Endothelial cell of umbilical vein (primary cell): ENCODE measurements at regions of chr1 and their contacts with region 1.

Region 1: GRCh38 chr1:2300851-2301606 is 72.9 kb downstream of the SKI start:
- DNase-seq: peak; percentile 62
- H3K4me3 ChIP-seq: no peak overlapping the region
- H3K27ac ChIP-seq: peak overlapping the region; percentile 83
- H3K4me1 ChIP-seq: peaks cover 27% of the 10 kb centered on the region
- H3K27me3 ChIP-seq: no peaks in the 10 kb centered on the region
- CTCF ChIP-seq: no peak
- POLR2A ChIP-seq: peak; percentile 21

Region 2: DNA sequence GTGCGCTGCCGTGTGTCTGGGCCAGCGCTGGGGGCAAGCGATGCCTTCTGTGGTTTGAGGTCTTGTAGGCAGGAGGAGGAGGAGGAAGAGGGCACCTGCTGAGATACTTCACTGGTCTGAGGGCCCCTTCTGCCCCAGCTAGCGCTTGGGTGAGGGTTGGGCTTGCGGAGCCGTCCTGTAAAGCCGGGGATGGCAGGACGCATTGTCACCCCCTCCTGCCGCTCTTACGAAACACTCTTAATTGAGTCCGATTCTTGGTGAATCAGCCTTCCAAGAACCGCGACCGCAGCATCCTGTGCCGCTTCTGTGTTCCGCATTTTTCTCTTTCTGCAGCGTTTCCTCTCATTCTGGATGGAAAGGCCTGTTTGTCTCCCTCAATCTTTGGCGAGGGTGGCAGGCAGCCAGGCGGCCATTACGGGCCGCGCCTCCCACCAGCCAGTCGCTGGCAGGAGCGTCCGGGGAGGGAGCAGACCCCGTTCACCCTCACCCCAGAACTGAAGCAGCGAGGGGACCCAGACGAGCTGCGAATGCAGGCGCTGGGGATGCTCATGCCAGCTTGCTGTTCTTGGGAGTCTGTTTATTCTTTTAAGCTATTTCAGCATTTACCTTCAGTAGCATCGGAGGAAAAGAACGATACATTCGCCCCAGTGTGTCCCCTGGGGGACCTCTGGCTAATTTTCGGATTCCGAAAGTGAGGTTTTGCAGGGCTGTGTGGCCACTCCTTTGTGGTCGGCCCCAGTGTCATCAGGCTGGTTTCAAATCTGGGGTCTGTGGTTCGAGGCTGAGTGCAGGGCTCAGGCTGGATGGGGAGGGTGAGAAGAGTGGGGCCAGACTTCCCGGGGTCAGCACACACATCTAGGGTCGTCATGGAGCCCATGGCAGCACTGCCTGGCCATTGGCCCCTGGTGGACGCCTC is 10.2 kb before region 1 on chr1:
- CTCF ChIA-PET with region 1: interaction called, 3 read pairs
- POLR2A ChIA-PET with region 1: interaction called, 3 read pairs
- dilution Hi-C with region 1: no loop called
- intact Hi-C with region 1: loop called (anchors 1 kb)
- DNase-seq: peak; percentile 94
- H3K4me3 ChIP-seq: peak overlapping the region in 1 of 3 experiments; percentile 39
- H3K27ac ChIP-seq: peak overlapping the region; percentile 87
- H3K4me1 ChIP-seq: peaks cover 29% of the 10 kb centered on the region
- H3K27me3 ChIP-seq: no peaks in the 10 kb centered on the region
- CTCF ChIP-seq: no peak
- POLR2A ChIP-seq: peak; percentile 22

Region 3: GRCh38 chr1:2314803-2315673 is 14.0 kb after region 1 on chr1:
- CTCF ChIA-PET with region 1: interaction called, 10 read pairs
- POLR2A ChIA-PET with region 1: no interaction called
- dilution Hi-C with region 1: no loop called
- intact Hi-C with region 1: loop called (anchors 2 kb)
- DNase-seq: peak; percentile 29
- H3K4me3 ChIP-seq: peak overlapping the region in 1 of 3 experiments; percentile 54
- H3K27ac ChIP-seq: no peak overlapping the region
- H3K4me1 ChIP-seq: peaks cover 7% of the 10 kb centered on the region
- H3K27me3 ChIP-seq: no peaks in the 10 kb centered on the region
- CTCF ChIP-seq: peak; percentile 44 to 72
- POLR2A ChIP-seq: no peak

Region 4: DNA sequence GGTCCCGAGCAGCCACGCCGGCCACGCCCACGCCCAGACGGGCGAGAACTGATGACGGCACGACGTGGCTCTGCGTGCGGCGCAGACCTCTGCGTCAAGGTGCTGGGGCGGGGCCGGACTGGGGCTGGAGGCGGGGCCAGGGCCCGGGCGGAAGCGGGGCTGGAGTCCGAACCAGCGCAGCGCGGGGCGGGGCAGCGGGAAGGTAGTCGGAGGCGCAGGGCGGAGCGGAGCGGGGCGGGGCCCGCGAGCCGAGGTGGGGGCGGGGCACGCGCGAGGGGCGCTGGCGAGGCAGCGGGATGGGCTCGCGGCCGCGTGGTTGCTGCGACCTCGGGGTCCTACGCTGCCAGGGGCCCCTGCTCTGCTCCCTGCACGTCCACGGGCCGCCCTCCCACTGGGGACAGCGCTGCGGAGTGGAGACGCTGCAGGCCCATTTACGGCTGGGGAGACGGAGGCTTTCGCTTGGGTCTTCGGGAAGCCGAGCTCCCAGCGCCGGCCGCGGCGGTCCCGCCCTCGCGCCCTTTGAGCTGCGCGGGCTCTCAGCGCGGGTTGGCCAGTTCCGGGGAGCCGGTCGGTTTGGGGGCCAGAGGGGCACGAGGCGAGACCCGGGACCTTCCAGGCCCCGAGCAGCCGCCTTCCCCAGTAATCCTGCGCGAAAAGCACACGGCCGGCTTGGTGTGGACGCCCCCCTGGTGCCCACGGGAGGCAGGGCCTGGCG is 111.6 kb after region 1 on chr1 and contains the start of gene PEX10:
- CTCF ChIA-PET with region 1: no interaction called
- POLR2A ChIA-PET with region 1: no interaction called
- dilution Hi-C with region 1: no loop called
- intact Hi-C with region 1: no loop called
- DNase-seq: peak; percentile 95
- H3K4me3 ChIP-seq: peak within 1 kb of the TSS; percentile 57 to 85 (median 71)
- H3K27ac ChIP-seq: peak within 1 kb of the TSS; percentile 57
- H3K4me1 ChIP-seq: peaks cover 10% of the 10 kb centered on the region
- H3K27me3 ChIP-seq: no peaks in the 10 kb centered on the region
- CTCF ChIP-seq: no peak
- POLR2A ChIP-seq: peak; percentile 53
- total RNA-seq, gene PEX10: 23.0 and 26.7 TPM in 2 replicates